ENCODE measurements at regions of chr12 and their contacts with region 1.

Region 1: DNA sequence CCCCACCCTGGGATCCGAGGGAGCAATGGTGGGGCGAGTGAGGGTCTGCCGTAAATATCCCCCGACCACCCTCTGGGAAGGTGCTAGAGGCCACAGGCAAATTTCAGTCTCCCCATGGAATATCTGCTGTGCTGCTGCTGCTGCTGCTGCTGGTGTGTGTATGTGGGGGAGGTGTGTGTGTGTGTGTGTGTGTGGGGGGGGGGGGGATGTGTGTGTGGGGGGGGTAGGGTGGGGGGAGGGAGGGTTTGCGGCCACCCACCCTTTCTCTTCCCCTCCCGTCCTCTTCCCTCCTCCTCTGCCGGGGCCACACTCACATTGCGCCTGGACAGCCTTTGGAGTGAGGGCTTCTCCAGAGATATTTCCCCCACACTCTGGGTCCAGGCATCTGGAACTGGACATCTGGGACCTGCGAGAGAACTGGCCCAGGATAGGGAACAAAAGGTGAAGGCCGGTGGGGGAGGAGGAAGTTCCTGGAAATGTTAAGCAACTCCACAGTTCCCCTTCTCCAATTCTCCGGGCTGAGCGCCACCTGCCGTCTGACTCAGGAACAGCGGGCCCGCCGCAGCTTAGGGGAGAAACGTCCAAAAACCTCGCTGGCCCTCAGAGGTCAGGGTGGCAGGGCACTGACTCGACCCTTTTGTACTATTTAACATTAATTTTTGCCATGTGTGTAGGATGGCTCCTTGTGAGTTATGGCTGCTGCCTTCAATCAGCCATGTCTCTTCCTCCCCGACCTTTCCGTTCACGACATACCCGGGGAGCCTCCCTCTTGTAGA is at the start of gene C1RL:
- DNase-seq: peak; percentile 94 to 97
- H3K4me3 ChIP-seq: peak within 1 kb of the TSS; percentile 62 to 69
- H3K27ac ChIP-seq: peak within 1 kb of the TSS; percentile 92
- H3K4me1 ChIP-seq: peaks cover 0 to 28% (median 15%) of the 10 kb centered on the region in 4 donors
- H3K27me3 ChIP-seq: no peaks in the 10 kb centered on the region
- CTCF ChIP-seq: peak; percentile 98 to 99

Region 2: DNA sequence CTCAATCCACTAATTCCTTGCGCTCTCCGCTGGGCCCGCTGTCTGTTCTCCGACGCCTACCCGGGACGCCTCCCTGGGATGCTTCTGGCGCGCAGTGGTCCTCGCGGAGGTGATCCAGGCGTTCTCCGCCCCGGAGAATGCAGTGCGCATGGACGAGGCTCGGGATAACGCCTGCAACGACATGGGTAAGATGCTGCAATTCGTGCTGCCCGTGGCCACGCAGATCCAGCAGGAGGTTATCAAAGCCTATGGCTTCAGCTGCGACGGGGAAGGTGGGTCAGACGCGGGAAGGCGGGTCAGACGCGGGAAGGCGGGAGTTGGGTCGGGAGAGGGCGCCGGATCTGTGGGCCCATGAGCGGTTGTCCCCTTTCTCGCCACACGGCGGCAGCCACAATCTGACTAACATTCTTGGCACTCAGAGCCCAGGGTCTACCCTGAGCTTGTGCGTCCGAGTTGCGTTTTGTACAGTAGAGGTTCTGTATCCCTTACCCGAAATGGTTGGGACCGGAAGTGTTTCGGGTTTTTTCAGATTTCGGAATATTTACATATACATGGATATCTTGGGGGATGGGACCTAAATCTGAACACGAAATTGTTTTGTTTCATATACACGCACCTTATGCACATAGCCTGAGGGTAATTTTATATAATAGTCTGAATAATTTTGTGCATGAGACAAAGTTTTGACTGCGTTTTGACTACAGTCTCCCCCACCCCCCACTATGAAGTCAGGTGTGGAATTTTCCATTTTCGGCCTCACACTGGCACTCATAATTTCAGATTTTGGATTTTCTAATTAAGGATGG is 164.4 kb before region 1 on chr12:
- intact Hi-C with region 1: loop called (anchors 10 kb)
- DNase-seq: peak; percentile 95 to 96
- H3K4me3 ChIP-seq: peak overlapping the region; percentile 74
- H3K27ac ChIP-seq: peak overlapping the region; percentile 94 to 98
- H3K4me1 ChIP-seq: peaks cover 0 to 46% (median 33%) of the 10 kb centered on the region in 4 donors
- H3K27me3 ChIP-seq: no peaks in the 10 kb centered on the region
- CTCF ChIP-seq: peak; percentile 77 to 96

Region 3: DNA sequence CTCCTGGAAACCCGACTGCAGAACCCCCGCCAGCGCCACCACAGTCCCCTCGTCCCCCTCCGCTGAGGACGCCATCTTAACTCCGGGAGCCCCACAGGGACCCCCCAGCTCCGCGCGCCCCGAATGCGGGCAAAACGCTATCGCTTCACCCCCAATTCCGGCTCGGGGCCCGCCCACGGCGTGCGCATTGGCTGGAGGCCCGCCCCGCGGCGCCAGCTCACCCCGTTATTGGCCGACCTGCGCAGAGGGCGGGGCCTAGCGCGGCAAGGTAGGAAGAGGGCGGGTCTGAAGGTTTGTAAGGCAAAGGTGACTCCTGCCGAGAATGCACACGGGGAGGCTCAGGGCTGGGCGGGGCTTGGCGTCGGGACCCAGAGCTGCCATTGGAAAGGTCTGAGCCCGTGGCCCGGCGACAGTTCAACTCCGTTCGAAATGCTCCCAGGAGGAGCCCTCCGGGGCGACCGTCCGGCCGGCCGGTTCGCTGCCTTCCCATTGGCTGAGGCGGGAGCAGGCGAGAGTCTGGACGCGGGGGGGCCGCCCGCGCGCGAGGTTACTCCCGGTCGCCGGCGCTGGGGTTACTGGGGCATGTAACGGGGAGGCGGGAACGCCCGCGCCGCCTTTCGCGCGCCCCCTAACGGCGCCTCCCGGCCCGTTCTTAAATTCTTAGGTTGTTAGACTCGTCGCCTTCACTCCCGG is 90.5 kb before region 1 on chr12 and contains the start of gene LPCAT3:
- intact Hi-C with region 1: loop called (anchors 5 kb)
- DNase-seq: peak; percentile 98 to 99
- H3K4me3 ChIP-seq: peak within 1 kb of the TSS; percentile 66 to 86
- H3K27ac ChIP-seq: peak within 1 kb of the TSS; percentile 84 to 97
- H3K4me1 ChIP-seq: peaks cover 0 to 31% (median 17%) of the 10 kb centered on the region in 4 donors
- H3K27me3 ChIP-seq: no peaks in the 10 kb centered on the region
- CTCF ChIP-seq: peak; percentile 85 to 93

Region 4: DNA sequence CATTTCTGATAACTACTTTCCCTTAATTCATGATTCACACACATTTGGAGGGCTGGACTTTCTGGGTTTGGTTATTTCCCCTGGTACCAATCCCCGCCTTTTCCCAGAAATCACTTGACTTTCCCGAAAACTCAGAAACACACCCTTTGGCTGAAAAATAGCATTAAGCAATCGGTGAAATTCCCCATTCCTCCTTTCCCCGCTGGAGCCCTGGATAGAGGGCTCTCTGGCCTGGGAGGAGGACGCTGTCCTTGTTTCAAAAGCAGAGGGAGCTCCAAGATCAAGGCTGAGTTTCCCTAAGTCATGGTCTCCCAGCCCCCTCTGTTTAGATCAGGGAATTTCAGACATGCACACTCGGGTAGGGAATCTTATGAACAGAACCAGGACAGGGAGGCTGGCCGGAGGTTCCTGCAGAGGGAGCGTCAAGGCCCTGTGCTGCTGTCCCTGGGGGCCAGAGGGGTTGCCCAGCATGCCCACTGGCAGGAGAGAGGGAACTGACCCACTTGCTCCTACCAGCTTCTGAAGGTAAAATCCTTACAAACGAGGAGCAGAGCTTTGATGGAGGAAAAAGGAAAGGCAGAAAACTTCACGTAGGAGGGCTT is 48.5 kb before region 1 on chr12 and contains the start of gene C1S:
- intact Hi-C with region 1: loop called (anchors 5 kb)
- DNase-seq: peak; percentile 88 to 94
- H3K4me3 ChIP-seq: peak within 1 kb of the TSS; percentile 43 to 52
- H3K27ac ChIP-seq: peak within 1 kb of the TSS; percentile 77 to 85
- H3K4me1 ChIP-seq: peaks cover 0 to 35% (median 12%) of the 10 kb centered on the region in 4 donors
- H3K27me3 ChIP-seq: peaks cover 0 to 3% of the 10 kb centered on the region in 2 donors
- CTCF ChIP-seq: peak; percentile 93 to 95